Activated naive CD4-positive, alpha-beta T cell treated with anti-CD3 and anti-CD28 coated beads for 36 hours (primary cell): ENCODE measurements at regions of chr6 and their contacts with region 1.

Region 1: DNA sequence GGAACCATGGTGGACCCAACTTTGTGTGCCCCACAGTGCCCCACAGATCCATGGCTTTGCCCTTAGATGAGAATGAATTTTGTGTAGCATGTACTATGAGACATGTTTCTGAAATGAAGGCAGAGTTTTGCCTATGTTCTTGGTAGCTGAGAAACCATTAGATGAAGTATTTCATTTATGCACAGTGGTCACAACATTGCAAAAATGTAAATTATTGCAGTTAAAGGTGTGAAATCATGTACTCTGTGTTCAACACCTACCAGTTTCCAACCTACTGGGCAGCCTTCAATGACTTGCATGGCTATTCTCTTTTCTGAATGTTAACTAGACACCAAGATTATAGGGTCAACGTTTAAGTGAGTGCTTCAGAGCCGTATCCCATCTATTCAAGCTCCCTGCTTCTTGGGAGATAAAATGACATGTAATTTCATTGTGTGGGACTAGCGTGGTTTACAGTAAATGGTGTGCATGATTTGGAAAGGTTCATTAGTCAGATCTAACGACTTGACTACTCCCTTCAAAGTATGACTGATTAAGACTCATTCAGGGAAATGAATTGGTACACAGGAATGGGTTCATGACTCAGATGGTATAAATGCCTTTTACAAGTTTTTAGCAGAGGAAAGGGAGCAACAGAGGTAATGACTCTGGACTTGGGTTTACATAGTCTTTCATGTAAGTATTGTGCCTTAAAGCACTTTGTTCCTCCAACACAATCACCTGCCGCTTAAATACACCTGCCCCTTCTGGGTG is 106.1 kb upstream of the AKIRIN2 start:
- DNase-seq: peak; percentile 16
- H3K4me3 Mint-ChIP-seq: no peak overlapping the region
- H3K27ac Mint-ChIP-seq: peak overlapping the region; percentile 50
- H3K4me1 Mint-ChIP-seq: peaks cover 16% of the 10 kb centered on the region
- H3K27me3 Mint-ChIP-seq: peaks cover 20% of the 10 kb centered on the region

Region 2: GRCh38 chr6:87472525-87473418 is 335.4 kb before region 1 on chr6 and contains the start of gene SLC35A1:
- CTCF ChIA-PET with region 1: no interaction called
- intact Hi-C with region 1: loop called (anchors 5 kb)
- DNase-seq: peak; percentile 80
- H3K4me3 Mint-ChIP-seq: peak within 1 kb of the TSS; percentile 95
- H3K27ac Mint-ChIP-seq: peak within 1 kb of the TSS; percentile 92
- H3K4me1 Mint-ChIP-seq: peaks cover 15% of the 10 kb centered on the region
- H3K27me3 Mint-ChIP-seq: peaks cover 4% of the 10 kb centered on the region
- total RNA-seq, gene SLC35A1: 6.7 to 6.8 TPM

Region 3: GRCh38 chr6:87731818-87732661 is 76.1 kb before region 1 on chr6:
- CTCF ChIA-PET with region 1: no interaction called
- intact Hi-C with region 1: loop called (anchors 1 kb)
- DNase-seq: peak; percentile 70
- H3K4me3 Mint-ChIP-seq: no peak overlapping the region
- H3K27ac Mint-ChIP-seq: peak overlapping the region; percentile 15
- H3K4me1 Mint-ChIP-seq: peaks cover 26% of the 10 kb centered on the region
- H3K27me3 Mint-ChIP-seq: no peaks in the 10 kb centered on the region

Region 4: DNA sequence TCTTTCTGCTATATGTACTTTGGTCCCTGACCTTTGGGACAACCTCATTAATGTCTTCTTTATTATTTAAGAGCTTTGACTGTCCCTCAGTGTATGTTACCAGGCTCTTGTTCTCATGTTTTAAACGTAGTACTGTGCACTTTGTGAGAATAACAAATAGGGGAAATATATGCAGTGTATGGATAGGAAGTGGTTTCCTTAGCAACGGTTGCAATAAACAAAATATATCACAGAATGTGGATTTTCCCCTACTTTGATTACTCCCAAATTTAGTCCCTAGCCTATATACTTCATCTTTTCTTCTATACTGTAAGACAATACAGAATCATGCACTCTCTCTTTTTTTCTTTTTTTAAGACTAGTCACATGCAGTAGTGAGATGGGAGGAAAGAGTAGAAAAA is 17.6 kb after region 1 on chr6:
- CTCF ChIA-PET with region 1: interaction called, 4 read pairs
- intact Hi-C with region 1: loop called (anchors 1 kb)
- DNase-seq: no peak
- H3K4me3 Mint-ChIP-seq: no peak overlapping the region
- H3K27ac Mint-ChIP-seq: no peak overlapping the region
- H3K4me1 Mint-ChIP-seq: peaks cover 14% of the 10 kb centered on the region
- H3K27me3 Mint-ChIP-seq: no peaks in the 10 kb centered on the region